T-cell (primary cell): ENCODE measurements at regions of chr12 and their contacts with region 1.

Region 1: GRCh38 chr12:51025836-51026638 is at the start of gene SLC11A2:
- DNase-seq: peak; percentile 71 to 94 (median 84)
- ATAC-seq: peak; percentile 94 to 97 (median 96)
- H3K4me3 ChIP-seq: peak within 1 kb of the TSS; percentile 60 to 85
- H3K4me3 Mint-ChIP-seq: peak within 1 kb of the TSS; percentile 96 to 99 (median 98)
- H3K27ac ChIP-seq: peak within 1 kb of the TSS; percentile 77
- H3K27ac Mint-ChIP-seq: peak within 1 kb of the TSS; percentile 98
- H3K4me1 ChIP-seq: peaks cover 20 to 48% of the 10 kb centered on the region in 2 experiments
- H3K4me1 Mint-ChIP-seq: peaks cover 55 to 60% (median 59%) of the 10 kb centered on the region in 3 donors
- H3K27me3 ChIP-seq: peaks cover 0 to 7% of the 10 kb centered on the region in 2 experiments
- H3K27me3 Mint-ChIP-seq: no peaks in the 10 kb centered on the region
- total RNA-seq, gene SLC11A2: 46.5 to 62.2 (median 52.3) TPM

Region 2: DNA sequence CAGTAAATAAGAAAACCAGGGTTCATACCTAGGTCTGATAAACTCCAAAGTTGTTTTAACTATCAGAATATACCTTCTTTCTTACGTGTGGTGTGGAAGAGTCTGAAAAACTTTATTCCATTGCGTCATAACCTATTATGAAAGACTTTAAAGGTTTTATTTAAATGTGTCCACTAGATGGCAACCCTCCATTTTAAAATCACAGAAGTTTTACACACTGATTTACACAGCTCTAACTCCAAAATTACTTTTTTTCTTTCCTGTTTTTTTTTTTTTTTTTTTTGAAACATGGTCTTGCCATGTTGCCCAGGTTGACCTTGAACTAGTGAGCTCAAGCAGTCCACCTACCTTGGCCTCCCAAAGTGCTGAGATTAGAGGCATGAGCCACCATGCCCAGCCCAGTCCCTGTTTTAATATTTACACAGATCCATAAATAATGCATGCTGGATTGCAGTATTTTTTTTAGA is 200.6 kb before region 1 on chr12:
- CTCF ChIA-PET with region 1: interaction called, 10 to 14 read pairs
- POLR2A ChIA-PET with region 1: interaction called in 1 of 2 experiments, 3 read pairs
- DNase-seq: peak in 1 of 35 experiments; percentile 77
- ATAC-seq: peak; percentile 59 to 93 (median 66)
- H3K4me3 ChIP-seq: no peak overlapping the region
- H3K4me3 Mint-ChIP-seq: no peak overlapping the region
- H3K27ac ChIP-seq: peak overlapping the region; percentile 65
- H3K27ac Mint-ChIP-seq: peak overlapping the region; percentile 39 to 80
- H3K4me1 ChIP-seq: peaks cover 2 to 3% of the 10 kb centered on the region in 2 experiments
- H3K4me1 Mint-ChIP-seq: peaks cover 6 to 10% (median 6%) of the 10 kb centered on the region in 3 donors
- H3K27me3 ChIP-seq: no peaks in the 10 kb centered on the region
- H3K27me3 Mint-ChIP-seq: no peaks in the 10 kb centered on the region

Region 3: DNA sequence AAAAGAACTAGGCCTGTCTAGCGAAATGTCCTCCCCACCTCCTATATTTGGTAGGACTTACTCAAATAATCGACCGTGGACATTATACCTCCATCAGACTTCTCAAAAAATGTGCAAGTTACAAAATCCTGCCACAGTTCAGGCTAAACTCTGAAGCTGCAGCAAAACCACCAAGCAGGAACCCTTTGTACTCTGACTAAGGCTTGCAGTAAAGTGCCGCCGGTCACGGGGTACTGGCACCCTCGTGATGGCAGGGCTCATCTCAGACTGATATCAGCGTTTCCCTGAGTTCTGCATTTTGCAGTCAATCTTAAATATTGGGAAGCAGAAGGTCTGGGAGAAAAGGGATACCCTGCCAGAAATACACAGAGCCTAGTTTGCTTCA is 17.0 kb before region 1 on chr12:
- CTCF ChIA-PET with region 1: interaction called, 3 to 16 read pairs
- POLR2A ChIA-PET with region 1: interaction called, 3 to 9 read pairs
- DNase-seq: peak in 34 of 35 experiments; percentile 31 to 74 (median 54)
- ATAC-seq: peak; percentile 99 to 100 (median 100)
- H3K4me3 ChIP-seq: peak overlapping the region in 1 of 2 donors; percentile 29
- H3K4me3 Mint-ChIP-seq: peak overlapping the region; percentile 44 to 76 (median 55)
- H3K27ac ChIP-seq: peak overlapping the region; percentile 27
- H3K27ac Mint-ChIP-seq: peak overlapping the region; percentile 79 to 88
- H3K4me1 ChIP-seq: peaks cover 11 to 12% of the 10 kb centered on the region in 2 experiments
- H3K4me1 Mint-ChIP-seq: peaks cover 33 to 39% (median 39%) of the 10 kb centered on the region in 3 donors
- H3K27me3 ChIP-seq: no peaks in the 10 kb centered on the region
- H3K27me3 Mint-ChIP-seq: no peaks in the 10 kb centered on the region